Heart right ventricle (tissue), 16 donors: ENCODE measurements at regions of chr11 and their contacts with region 1.

Region 1: DNA sequence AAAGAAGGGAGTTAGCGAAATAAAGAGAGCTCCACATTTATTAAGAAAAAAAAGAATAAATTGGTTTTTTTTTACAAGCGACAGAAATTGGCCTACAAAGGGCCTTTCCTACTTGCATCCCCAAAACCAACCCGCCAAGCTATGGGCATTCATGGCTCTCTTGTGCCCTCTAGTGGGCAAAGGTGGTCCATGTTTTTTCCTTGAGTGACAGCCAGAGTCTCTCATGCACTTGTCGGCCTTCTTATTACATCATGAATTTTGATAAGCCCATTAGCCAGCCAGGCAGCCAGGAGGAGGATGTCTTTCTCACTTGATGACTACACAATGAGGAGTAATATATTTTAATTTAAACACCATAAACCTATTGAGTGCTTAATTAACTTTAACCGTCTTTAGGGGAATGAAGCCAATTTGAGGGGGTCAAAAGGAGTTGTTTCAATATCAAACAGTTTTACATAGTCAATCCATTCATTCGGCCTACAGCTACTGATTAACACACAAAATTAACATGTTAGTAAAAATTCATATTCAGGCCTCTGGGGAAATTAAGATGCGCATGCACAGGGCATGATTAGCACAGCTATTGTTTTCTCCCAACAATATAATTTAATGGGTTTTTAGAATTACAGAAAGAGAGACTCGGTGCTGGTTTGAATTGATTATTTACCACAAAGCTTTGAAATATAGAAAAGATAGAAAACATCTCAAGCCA is 85.5 kb downstream of the RCN1 start:
- DNase-seq: peak; percentile 27 to 82
- ATAC-seq: peak; percentile 52 to 80 (median 64)
- H3K4me3 ChIP-seq: no peak overlapping the region
- H3K27ac ChIP-seq: no peak overlapping the region
- H3K4me1 ChIP-seq: peaks cover 0 to 15% (median 5%) of the 10 kb centered on the region in 9 donors
- H3K27me3 ChIP-seq: peaks cover 0 to 10% (median 0%) of the 10 kb centered on the region in 7 donors
- CTCF ChIP-seq: peak; percentile 77 to 97 (median 89)

Region 2: DNA sequence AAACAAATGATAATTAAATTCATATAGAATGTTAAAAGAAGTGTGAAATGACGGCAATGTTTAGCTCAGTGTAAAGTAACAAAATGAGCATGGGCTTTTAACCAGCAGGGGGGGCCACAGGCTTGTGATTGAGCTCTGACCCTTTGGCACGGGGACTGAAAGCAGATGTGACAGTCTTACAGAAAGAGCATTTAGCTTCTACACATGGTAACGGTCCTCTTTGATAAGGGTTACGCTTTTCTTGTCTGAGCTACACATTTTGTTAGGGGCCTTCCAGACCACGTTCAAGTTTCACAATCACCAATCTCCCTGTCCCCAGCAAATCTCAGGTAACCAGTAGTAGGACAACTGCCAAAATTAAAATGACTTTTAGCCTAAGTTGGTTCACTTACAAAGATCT is 1069.3 kb before region 1 on chr11:
- intact Hi-C with region 1: loop called in 4 of 10 experiments (anchors 5 to 10 kb)
- DNase-seq: peak; percentile 24 to 49
- ATAC-seq: peak in 5 of 8 donors; percentile 38 to 69 (median 67)
- H3K4me3 ChIP-seq: no peak overlapping the region
- H3K27ac ChIP-seq: no peak overlapping the region
- H3K4me1 ChIP-seq: no peaks in the 10 kb centered on the region
- H3K27me3 ChIP-seq: peaks cover 0 to 4% (median 0%) of the 10 kb centered on the region in 7 donors
- CTCF ChIP-seq: peak; percentile 12 to 77 (median 72)

Region 3: DNA sequence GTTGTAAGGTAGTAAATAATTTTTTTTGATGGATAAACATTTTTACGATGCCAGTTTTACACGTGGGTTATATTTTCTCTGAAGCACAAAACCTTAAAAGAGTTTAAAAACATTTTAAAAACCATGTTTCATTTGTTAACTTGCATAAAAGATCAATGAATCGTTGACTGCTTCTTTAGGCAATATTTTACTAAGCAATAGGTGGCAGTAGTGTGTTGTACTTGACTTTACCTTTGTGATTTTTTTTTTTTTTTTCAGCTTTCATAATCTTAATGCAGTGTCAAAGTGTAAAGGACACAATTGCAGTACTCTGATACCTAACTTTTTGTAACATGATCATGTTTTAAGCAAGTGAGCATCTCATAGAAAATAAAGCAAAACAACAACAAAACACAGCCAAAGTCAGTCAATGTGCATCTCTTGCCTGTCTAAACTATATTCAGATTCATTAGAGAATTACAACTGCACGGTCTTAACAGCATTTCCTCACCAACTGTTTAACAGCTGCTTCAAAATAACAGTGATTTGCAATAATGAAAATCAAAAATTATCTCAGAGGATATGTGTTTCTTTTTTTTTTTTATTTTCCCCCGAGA is 779.0 kb before region 1 on chr11:
- intact Hi-C with region 1: loop called in 5 of 10 experiments (anchors 10 kb)
- DNase-seq: no peak
- ATAC-seq: no peak
- H3K4me3 ChIP-seq: no peak overlapping the region
- H3K27ac ChIP-seq: no peak overlapping the region
- H3K4me1 ChIP-seq: no peaks in the 10 kb centered on the region
- H3K27me3 ChIP-seq: no peaks in the 10 kb centered on the region
- CTCF ChIP-seq: peak; percentile 17 to 73 (median 58)

Region 4: DNA sequence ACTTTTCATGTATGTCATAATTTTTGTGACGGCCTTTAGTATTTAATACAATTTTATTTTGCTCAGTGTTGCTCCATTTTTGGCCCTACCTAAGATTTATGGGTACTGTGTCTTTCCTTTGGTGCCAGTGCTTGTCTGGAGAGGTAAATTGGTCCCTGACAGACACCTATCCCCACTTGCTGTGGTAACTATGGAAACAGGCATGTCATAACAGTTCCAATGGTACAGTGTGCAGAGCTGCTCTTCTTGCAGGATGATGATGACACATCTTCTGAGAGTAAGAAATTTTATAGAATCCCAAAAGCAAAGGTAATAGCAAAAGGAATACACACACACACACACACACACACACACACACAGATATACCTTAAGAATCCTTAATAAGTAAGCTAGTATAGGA is 548.3 kb before region 1 on chr11:
- intact Hi-C with region 1: no loop called
- DNase-seq: no peak
- ATAC-seq: no peak
- H3K4me3 ChIP-seq: no peak overlapping the region
- H3K27ac ChIP-seq: no peak overlapping the region
- H3K4me1 ChIP-seq: no peaks in the 10 kb centered on the region
- H3K27me3 ChIP-seq: no peaks in the 10 kb centered on the region
- CTCF ChIP-seq: no peak

Region 5: DNA sequence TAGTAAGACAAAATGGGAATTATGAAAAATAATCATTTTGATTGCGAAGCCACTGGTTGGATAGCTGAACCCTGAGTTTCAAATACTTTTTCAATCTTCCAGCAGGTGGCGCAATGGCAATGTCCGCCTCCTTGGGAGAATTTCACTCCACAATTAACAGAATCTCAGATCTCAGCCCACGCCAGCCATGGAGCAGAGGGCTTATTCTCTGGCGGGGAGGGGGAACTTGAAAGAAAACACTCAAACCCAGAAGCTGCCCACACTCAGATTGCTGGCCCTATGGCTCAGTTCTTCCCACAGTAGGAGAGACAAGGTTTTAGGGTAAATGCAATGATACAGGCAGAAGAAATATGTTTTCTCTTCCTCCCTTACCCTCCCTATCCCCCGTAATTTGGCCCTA is 124.2 kb before region 1 on chr11:
- intact Hi-C with region 1: loop called (anchors 1 to 2 kb)
- DNase-seq: peak; percentile 27 to 60
- ATAC-seq: peak in 5 of 8 donors; percentile 41 to 63 (median 58)
- H3K4me3 ChIP-seq: no peak overlapping the region
- H3K27ac ChIP-seq: no peak overlapping the region
- H3K4me1 ChIP-seq: peaks cover 0 to 5% (median 0%) of the 10 kb centered on the region in 9 donors
- H3K27me3 ChIP-seq: peaks cover 0 to 19% (median 9%) of the 10 kb centered on the region in 7 donors
- CTCF ChIP-seq: peak; percentile 76 to 90 (median 82)

Region 6: DNA sequence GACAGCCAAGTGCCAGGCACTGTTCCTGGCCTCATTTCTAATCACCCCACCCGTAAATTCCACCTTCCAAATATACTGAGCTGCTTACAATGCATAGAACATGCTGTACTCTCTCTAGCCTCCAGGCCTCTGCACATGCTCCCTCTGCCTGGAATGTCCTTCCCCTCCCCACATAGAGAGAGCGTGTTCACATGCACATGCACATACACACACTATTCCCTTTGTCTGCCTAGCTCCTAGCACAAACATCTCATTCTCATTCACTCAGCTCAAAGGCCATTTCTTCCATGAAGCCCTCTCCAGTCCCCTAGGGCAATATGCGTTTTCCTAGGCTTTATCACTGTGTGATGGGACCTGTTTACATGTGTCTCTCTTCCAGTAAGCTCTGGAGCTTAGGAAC is 114.4 kb after region 1 on chr11:
- intact Hi-C with region 1: no loop called
- DNase-seq: no peak
- ATAC-seq: peak in 1 of 8 donors; percentile 51
- H3K4me3 ChIP-seq: no peak overlapping the region
- H3K27ac ChIP-seq: no peak overlapping the region
- H3K4me1 ChIP-seq: no peaks in the 10 kb centered on the region
- H3K27me3 ChIP-seq: peaks cover 0 to 16% (median 5%) of the 10 kb centered on the region in 7 donors
- CTCF ChIP-seq: no peak